PC-9 (cell line): ENCODE measurements at regions of chr4 and their contacts with region 1.

Region 1: DNA sequence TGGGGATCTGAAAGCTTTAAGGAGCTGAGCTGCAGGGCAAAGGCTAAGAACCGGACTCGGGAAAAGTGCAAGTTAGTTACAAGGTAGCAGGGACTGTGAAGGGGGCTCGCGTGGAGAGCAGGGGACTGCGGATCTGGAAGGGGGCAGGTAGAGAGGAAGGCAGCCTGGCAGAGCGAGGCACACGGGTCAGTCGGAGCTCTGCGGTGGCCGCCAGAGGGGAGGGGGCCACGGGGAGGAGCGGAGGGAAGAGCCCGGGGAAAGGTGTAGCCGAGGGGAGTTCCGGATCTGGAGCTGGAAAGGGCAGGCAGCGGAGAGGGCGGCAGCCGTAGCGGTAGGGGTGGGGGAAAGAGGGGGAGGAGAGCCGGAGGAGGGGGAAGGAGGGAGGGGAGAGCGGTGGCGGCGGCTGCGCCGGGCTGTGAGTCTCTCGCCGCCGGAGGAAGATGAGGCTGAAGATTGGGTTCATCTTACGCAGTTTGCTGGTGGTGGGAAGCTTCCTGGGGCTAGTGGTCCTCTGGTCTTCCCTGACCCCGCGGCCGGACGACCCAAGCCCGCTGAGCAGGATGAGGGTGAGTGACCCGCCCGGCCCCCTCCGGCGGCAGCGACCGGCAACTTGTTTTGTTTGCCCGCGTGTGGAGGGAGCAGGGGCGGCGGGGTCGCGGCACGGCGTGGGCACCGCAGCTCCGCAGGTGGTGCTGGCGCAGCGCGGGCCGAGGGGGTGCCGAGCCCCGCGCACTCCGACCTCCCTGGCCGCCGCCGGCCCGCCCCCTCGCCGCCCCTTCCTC is at the start of gene GALNT7:
- DNase-seq: peak; percentile 57 to 75
- H3K4me3 ChIP-seq: peak within 1 kb of the TSS; percentile 87
- H3K27ac ChIP-seq: peak within 1 kb of the TSS; percentile 91
- H3K4me1 ChIP-seq: peaks cover 14% of the 10 kb centered on the region
- H3K27me3 ChIP-seq: no peaks in the 10 kb centered on the region
- CTCF ChIP-seq: no peak
- total RNA-seq, gene GALNT7: 57.2 and 72.5 TPM in 2 replicates

Region 2: DNA sequence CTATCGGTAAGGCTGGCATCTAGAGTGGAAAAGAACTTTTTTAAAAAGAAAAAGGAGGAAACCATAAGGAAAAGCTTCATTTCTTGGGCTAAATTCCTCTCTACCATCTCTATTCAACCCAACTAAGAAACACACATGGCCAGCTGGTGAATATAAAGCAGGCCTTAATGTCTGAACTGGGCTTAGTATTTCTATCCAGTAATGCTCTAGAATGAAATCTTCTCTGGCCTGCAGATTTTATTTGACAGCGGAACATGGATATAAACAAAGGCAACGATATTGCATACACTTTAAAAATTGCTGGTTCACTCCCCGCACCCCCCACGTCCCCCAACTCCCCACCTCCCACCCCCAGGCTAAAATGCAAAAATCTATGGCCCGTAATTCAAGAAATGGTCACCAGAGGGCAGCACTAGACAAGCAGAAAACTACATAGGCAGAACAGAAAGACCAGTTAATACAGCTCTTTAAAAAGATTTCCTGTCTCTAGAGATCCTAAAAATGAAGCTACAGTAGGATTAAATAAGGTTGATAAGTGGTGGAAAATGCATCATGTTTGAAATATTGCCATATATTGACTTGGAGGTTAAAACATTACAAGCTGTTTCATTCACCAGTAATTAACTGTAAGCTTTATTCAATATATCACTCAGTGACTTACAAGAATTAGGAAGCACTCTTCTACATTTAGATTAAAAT is 155.2 kb before region 1 on chr4:
- CTCF ChIA-PET with region 1: interaction called, 7 read pairs
- POLR2A ChIA-PET with region 1: no interaction called
- intact Hi-C with region 1: loop called (anchors 5 kb)
- DNase-seq: peak in 1 of 2 experiments; percentile 41
- H3K4me3 ChIP-seq: no peak overlapping the region
- H3K27ac ChIP-seq: no peak overlapping the region
- H3K4me1 ChIP-seq: peaks cover 11% of the 10 kb centered on the region
- H3K27me3 ChIP-seq: no peaks in the 10 kb centered on the region
- CTCF ChIP-seq: peak; percentile 79

Region 3: GRCh38 chr4:173057901-173058300 is 110.7 kb before region 1 on chr4:
- CTCF ChIA-PET with region 1: no interaction called
- POLR2A ChIA-PET with region 1: no interaction called
- intact Hi-C with region 1: no loop called
- DNase-seq: no peak
- H3K4me3 ChIP-seq: no peak overlapping the region
- H3K27ac ChIP-seq: no peak overlapping the region
- H3K4me1 ChIP-seq: no peaks in the 10 kb centered on the region
- H3K27me3 ChIP-seq: no peaks in the 10 kb centered on the region
- CTCF ChIP-seq: no peak

Region 4: DNA sequence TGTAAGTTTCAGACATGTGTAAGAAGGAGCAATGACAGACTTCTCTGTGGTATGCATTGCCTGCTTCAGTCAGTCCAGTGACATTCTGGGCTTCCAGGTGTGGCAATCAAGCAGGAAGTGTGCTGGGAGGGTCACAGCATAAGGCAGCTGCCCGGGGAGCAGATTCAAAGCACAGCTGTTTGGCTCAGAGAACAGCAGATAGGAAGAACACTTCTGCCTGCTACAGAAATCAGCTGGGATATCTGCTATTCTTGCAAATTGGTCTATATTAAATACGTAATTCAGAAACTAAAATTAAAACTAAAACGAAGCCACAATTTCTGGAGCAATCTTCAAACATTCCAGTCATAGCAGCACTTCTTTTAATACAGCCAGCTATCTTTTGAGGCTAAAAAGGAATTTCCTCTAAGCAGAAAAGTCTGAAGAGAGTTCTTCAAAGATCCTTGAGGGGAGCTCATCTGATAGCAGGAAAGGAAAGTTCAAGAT is 47.5 kb before region 1 on chr4:
- CTCF ChIA-PET with region 1: no interaction called
- POLR2A ChIA-PET with region 1: interaction called, 4 read pairs
- intact Hi-C with region 1: loop called (anchors 1 kb)
- DNase-seq: peak; percentile 52 to 56
- H3K4me3 ChIP-seq: no peak overlapping the region
- H3K27ac ChIP-seq: no peak overlapping the region
- H3K4me1 ChIP-seq: 0 out of 2 replicates have a peak, but pooled peaks cover 7% of the 10 kb centered on the region
- H3K27me3 ChIP-seq: no peaks in the 10 kb centered on the region
- CTCF ChIP-seq: no peak

Region 5: DNA sequence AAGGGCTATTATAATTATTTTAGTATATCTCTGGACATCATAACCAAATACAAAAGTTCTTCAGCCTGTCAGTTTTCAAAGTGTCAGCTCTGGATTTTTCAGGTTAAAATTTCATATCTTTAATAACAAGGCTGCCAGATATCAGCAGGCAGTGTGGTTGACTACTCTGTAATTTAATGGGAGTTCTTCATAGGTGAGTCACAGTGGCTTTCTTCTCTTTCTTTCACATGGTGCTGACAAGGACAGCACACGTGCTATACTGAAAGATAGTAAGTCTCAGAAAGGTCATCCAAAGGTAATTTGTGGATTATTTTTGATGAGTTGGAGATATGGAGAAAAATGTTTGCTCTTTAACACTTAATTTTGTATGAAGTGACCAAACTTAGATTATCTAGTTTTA is 43.3 kb after region 1 on chr4:
- CTCF ChIA-PET with region 1: no interaction called
- POLR2A ChIA-PET with region 1: interaction called, 4 read pairs
- intact Hi-C with region 1: loop called (anchors 1 kb)
- DNase-seq: peak in 1 of 2 experiments; percentile 84
- H3K4me3 ChIP-seq: 0 out of 2 replicates have a peak overlapping the region, but pooled peaks have one; percentile 10
- H3K27ac ChIP-seq: peak overlapping the region; percentile 75
- H3K4me1 ChIP-seq: peaks cover 53% of the 10 kb centered on the region
- H3K27me3 ChIP-seq: no peaks in the 10 kb centered on the region
- CTCF ChIP-seq: no peak

Region 6: DNA sequence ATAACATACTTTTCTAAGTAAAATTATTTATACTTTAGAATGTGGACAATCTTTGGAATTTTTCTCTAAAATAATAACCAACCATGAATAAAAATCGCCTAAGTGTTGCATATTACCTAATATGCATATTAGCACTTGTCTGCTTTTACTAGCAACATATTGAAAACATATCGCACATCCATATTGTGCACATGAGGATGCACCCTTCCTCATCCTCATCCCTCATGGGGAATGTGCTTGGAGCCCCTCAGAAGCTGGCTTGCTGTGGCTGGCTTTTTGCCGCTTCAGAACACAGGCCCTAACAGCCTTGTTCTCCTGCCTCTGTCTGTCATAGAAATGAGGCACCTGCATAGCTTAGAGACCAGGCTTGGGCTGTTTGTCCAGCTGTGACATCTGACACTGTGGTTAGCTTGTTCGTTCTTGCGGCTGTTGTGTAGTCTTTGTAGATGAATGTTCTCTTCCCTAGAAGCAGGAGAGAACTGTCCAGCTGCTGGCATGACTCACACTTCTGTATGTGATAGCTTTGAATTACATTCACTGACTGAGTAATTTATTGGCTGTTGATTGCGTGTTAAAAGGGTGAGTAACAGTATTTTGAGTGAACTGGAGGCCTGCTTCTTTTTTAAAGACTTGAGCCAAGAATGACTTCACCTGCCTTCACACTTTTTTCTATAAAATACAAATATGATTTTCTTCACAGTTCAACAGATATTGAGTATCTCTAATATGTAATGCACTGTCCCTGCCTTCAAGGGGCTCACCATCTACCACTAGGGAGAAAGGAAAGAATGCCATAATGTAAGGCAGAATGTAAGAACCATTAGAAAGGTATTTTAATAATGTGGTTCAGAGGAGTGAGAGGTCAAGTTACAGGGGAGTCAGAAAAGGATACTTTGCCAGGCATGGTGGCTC is 83.7 kb after region 1 on chr4:
- CTCF ChIA-PET with region 1: interaction called, 3 read pairs
- POLR2A ChIA-PET with region 1: no interaction called
- intact Hi-C with region 1: loop called (anchors 1 kb)
- DNase-seq: peak; percentile 81 to 99
- H3K4me3 ChIP-seq: no peak overlapping the region
- H3K27ac ChIP-seq: peak overlapping the region; percentile 81
- H3K4me1 ChIP-seq: peaks cover 23% of the 10 kb centered on the region
- H3K27me3 ChIP-seq: no peaks in the 10 kb centered on the region
- CTCF ChIP-seq: no peak

Region 7: DNA sequence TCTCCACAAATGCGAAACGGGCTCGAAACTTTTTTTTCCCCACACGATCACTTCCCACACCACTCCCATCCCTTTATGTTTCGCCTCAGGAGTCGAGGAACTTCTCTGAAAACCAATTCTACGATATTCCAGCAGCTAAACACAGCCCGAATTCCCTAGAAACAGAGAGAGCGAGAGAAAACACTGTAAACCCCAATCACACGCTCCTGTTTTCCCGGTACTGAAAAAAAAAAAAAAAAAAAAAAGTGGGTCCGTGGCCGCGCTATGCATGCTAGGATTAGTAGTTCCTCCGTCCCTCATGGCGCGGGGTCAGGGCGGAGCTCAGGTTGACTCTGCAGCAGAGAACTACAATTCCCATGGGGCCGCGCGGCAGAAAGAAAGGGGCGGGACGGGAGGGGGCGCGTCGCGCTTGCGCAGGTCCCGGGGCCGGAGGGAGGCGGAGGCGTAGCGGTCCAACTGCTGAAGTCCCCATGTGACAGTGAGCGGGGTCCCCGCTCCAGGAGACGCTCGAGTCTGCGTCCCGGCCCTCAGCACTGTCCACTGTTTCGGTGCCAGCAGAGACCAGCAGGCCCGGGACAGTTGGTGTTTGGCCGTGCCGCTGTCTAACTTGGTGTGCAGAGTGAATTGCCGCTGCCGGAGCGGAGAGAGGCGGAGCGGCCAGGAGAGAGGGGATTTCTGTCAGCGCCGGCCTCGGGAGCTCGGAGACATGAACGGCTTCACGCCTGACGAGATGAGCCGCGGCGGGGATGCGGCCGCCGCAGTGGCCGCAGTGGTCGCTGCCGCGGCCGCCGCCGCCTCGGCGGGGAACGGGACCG is 202.1 kb after region 1 on chr4 and contains the start of gene SAP30:
- CTCF ChIA-PET with region 1: no interaction called
- POLR2A ChIA-PET with region 1: interaction called, 5 read pairs
- intact Hi-C with region 1: loop called (anchors 1 kb)
- DNase-seq: peak; percentile 82 to 93
- H3K4me3 ChIP-seq: peak within 1 kb of the TSS; percentile 82
- H3K27ac ChIP-seq: peak within 1 kb of the TSS; percentile 59
- H3K4me1 ChIP-seq: no peaks in the 10 kb centered on the region
- H3K27me3 ChIP-seq: no peaks in the 10 kb centered on the region
- CTCF ChIP-seq: no peak
- total RNA-seq, gene SAP30: 8.0 and 11.4 TPM in 2 replicates

Region 8: DNA sequence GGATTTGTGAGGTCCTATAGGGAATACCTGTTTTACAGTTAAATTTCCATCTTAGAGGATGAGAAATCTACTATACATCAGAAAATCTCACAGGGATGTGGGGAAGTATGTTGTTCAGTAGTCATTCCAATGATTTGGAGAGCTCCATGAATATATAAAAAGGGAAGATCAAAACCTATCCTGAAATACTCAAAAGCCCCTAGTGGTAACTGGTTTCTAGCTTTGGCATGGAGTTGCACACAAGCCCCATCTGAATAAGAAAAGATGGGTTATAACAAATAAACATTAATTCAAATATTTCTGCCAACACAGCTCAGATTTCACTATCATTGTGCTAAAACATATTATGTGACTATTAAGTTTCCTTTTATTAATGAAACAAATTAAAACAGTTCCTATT is 1013.2 kb after region 1 on chr4:
- CTCF ChIA-PET with region 1: no interaction called
- POLR2A ChIA-PET with region 1: no interaction called
- intact Hi-C with region 1: no loop called
- DNase-seq: no peak
- H3K4me3 ChIP-seq: no peak overlapping the region
- H3K27ac ChIP-seq: no peak overlapping the region
- H3K4me1 ChIP-seq: no peaks in the 10 kb centered on the region
- H3K27me3 ChIP-seq: no peaks in the 10 kb centered on the region
- CTCF ChIP-seq: no peak